PC-3 (cell line): ENCODE measurements at regions of chr5 and their contacts with region 1.

Region 1: GRCh38 chr5:173331956-173332479 is 3.8 kb upstream of the STC2 start:
- DNase-seq: peak; percentile 95
- ATAC-seq: peak; percentile 14
- H3K4me3 ChIP-seq: no peak overlapping the region
- H3K27ac ChIP-seq: no peak overlapping the region
- H3K4me1 ChIP-seq: peaks cover 41% of the 10 kb centered on the region
- H3K27me3 ChIP-seq: no peaks in the 10 kb centered on the region
- CTCF ChIP-seq: peak; percentile 97

Region 2: GRCh38 chr5:172659909-172660628 is 671.9 kb before region 1 on chr5:
- CTCF ChIA-PET with region 1: no interaction called
- POLR2A ChIA-PET with region 1: no interaction called
- intact Hi-C with region 1: no loop called
- DNase-seq: no peak
- ATAC-seq: peak; percentile 22
- H3K4me3 ChIP-seq: no peak overlapping the region
- H3K27ac ChIP-seq: no peak overlapping the region
- H3K4me1 ChIP-seq: no peaks in the 10 kb centered on the region
- H3K27me3 ChIP-seq: no peaks in the 10 kb centered on the region
- CTCF ChIP-seq: no peak

Region 3: GRCh38 chr5:173165177-173166016 is 166.6 kb before region 1 on chr5:
- CTCF ChIA-PET with region 1: no interaction called
- POLR2A ChIA-PET with region 1: no interaction called
- intact Hi-C with region 1: loop called (anchors 5 kb)
- DNase-seq: no peak
- ATAC-seq: no peak
- H3K4me3 ChIP-seq: no peak overlapping the region
- H3K27ac ChIP-seq: no peak overlapping the region
- H3K4me1 ChIP-seq: no peaks in the 10 kb centered on the region
- H3K27me3 ChIP-seq: no peaks in the 10 kb centered on the region
- CTCF ChIP-seq: no peak

Region 4: DNA sequence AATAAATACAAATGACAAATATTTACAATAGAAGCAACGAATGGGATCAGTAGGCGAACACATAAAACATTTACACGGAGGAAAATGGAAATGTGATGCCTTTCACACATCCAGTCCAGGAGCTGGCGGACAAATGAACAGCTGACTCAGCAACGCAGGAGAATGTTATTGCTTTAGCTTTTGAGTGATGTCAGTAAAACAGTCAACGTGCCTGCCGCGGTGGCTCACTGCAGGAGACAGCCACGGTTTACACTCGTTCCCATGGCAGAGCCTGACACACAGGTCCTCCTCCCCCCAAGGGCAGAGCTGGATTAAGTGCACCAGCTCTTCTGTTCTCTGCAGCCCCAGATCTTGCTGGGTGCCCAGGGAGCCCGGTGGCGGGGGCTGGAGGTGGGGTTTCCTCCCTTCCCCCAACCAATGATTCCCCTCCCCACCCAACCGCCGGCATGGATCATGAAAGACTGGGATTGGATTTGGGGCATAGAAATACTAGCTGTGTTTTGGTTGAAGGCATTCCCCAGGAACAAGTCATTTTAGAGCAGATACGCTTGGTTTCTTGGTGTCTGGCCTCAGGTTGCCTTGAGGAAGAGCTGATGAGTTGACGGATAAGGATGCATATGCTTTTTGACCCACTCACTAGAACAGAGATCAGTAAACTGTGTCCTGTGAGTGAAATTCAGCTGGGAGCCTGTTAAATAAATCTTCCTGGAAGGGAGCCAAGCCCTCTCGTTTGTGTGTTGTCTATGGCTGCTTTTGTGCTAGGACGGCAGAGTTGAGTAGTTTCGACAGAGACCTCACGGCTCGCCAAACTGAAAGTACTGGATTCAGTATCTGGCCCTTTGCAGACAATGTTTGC is 16.3 kb before region 1 on chr5:
- CTCF ChIA-PET with region 1: interaction called, 5 read pairs
- POLR2A ChIA-PET with region 1: interaction called, 12 read pairs
- intact Hi-C with region 1: loop called (anchors 1 kb)
- DNase-seq: peak; percentile 57
- ATAC-seq: peak; percentile 46
- H3K4me3 ChIP-seq: no peak overlapping the region
- H3K27ac ChIP-seq: no peak overlapping the region
- H3K4me1 ChIP-seq: peaks cover 9% of the 10 kb centered on the region; the same call in 1 of the 2 replicates
- H3K27me3 ChIP-seq: no peaks in the 10 kb centered on the region
- CTCF ChIP-seq: no peak

Region 5: DNA sequence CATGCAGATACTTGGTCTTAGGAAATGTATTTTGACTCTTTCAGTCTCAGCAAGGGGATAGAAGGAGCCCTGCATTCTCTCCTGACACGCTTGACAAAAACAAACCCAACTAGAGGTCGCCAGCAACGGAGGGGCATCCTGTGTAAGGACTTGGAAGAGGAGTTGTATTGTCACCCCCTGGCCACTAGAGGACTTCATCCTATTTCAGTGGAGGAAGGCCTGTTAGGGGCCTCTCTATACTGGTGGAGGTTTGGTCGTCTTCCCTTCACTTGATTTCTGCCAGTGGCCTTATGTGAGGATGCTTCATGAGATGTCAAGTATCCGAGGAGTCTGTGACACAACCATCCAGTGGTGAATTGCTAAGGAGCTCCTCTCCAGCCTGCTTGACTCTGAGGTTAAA is 119.0 kb after region 1 on chr5:
- CTCF ChIA-PET with region 1: interaction called, 4 read pairs
- POLR2A ChIA-PET with region 1: interaction called, 5 read pairs
- intact Hi-C with region 1: loop called (anchors 1 kb)
- DNase-seq: peak; percentile 39
- ATAC-seq: no peak
- H3K4me3 ChIP-seq: no peak overlapping the region
- H3K27ac ChIP-seq: peak overlapping the region; percentile 95
- H3K4me1 ChIP-seq: peaks cover 45% of the 10 kb centered on the region
- H3K27me3 ChIP-seq: no peaks in the 10 kb centered on the region
- CTCF ChIP-seq: peak; percentile 70

Region 6: DNA sequence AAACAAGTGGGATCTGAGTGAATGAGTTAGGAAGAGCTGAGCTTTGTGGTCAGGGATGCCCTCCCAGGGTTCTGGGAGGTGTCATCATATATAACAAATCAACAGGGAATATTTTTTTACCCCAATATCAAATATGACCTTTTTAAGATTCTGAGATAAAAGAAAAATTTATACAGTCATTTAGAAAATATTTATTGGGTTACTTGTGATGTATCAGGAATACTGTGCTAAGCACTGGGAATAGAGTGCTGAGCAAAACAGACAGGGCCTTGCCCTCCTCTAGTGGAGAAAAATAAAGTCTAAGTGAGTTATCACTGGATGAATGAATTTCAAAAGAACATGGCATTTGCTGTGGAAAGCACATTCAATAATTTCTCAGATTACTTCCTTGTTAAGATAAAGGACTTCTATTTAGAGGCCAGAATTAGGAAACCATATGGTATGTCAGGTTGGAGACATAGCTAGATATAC is 181.5 kb after region 1 on chr5:
- CTCF ChIA-PET with region 1: no interaction called
- POLR2A ChIA-PET with region 1: interaction called, 3 read pairs
- intact Hi-C with region 1: loop called (anchors 1 kb)
- DNase-seq: peak; percentile 36
- ATAC-seq: peak; percentile 66
- H3K4me3 ChIP-seq: no peak overlapping the region
- H3K27ac ChIP-seq: peak overlapping the region; percentile 77
- H3K4me1 ChIP-seq: peaks cover 17% of the 10 kb centered on the region
- H3K27me3 ChIP-seq: no peaks in the 10 kb centered on the region
- CTCF ChIP-seq: no peak

Region 7: DNA sequence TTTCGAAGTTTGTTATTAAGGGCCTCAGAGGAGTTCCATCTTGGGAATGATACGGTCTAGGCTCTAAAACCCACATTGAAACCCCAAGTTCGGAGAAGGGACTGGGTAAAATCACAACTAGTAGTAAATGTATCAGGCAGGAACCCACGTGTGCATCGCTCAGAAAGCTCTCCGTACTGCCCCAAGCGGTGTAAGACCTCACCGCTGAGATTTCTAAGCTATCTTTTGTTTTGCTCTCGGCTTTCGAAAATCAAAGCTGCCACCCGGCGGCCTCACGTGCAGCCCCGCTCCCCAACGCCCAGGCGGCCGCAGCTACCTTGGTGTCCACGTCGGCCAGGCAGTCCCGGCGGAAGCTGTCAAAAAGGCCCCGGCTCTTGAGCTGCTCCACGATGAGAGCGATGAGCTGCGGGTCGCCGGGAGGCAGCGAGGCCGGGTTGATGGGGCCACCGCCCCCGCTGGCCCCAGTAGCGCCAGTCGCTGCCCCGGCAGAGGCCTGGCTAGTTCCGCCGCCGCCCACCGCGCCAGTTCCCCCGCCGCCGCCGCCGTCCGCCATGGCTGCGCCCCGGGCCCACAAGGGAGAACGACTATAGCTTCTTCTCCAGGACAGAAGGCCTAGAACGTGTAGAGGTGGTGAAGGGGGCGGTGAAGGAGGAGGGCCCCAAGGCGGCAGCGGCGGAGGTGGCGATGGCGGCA is 284.0 kb after region 1 on chr5:
- CTCF ChIA-PET with region 1: interaction called, 10 read pairs
- POLR2A ChIA-PET with region 1: interaction called, 8 read pairs
- intact Hi-C with region 1: loop called (anchors 1 kb)
- DNase-seq: peak; percentile 79
- ATAC-seq: peak; percentile 62
- H3K4me3 ChIP-seq: peak overlapping the region; percentile 90
- H3K27ac ChIP-seq: peak overlapping the region; percentile 71
- H3K4me1 ChIP-seq: peaks cover 36% of the 10 kb centered on the region
- H3K27me3 ChIP-seq: no peaks in the 10 kb centered on the region
- CTCF ChIP-seq: peak; percentile 81